WTC11 (cell line): ENCODE measurements at regions of chr19 and their contacts with region 1.

Region 1: DNA sequence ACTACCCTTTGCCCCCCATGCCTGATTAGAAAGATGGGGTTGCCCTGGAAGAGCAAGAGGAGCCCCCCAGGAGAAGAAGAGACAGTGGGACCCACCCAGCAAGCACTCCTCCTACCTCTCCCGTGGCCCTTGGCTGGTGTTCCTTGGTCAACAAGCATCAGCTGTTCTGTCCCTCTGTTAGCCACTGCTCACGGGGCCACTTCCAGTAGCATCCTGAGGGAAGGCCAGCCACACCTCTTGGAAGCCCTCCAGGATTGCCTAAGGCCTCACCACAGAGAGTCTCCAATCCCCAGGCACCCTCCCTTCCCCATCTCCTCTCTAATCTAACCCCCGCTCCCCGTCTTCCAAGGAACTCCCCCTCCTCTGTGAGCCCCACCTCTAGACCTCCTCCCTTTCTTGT is 15.1 kb upstream of the DPP9 start:
- DNase-seq: no peak
- ATAC-seq: no peak
- H3K4me3 Mint-ChIP-seq: no peak overlapping the region
- H3K27ac Mint-ChIP-seq: no peak overlapping the region
- H3K4me1 Mint-ChIP-seq: peaks cover 17% of the 10 kb centered on the region
- H3K27me3 Mint-ChIP-seq: peaks cover under 1% of the 10 kb centered on the region; the same call in 1 of the 2 replicates
- CTCF ChIP-seq: no peak

Region 2: DNA sequence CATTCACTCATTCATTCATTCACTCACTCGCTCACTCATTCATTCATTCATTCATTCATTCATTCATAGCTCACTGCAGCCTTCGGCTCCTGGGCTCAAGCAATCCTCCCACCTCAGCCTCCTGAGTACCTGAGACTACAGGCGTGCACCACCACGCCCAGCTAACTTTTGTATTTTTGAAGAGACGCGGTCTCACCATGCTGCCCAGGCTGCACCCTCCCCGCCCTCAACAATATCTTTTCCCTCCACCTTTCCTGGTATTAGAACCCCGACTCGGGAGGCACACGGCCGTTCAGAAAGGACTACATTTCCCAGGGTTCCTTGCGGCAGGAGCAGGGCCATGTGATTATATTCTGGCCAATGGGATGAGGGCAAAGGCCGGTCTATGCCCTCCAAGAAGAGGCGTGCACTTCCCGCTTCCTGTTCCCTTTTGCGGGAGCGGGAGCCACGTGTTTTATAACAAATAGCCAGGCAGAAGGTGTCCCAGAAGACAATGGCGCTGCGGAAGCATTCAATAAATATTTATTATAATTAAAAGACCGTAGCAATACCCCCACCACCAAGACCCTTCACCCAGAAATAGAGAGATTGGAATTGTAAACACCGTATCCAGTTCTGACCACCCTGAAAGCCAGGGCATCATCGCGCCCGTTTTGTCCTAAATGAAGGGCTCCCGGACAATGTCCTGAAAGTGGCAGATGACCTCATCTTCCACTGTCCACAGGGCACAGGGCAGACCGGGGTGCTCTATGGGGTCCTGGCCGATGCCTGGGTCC is 76.9 kb after region 1 on chr19:
- CTCF ChIA-PET with region 1: interaction called, 17 read pairs
- POLR2A ChIA-PET with region 1: no interaction called
- DNase-seq: peak; percentile 86
- ATAC-seq: peak; percentile 82
- H3K4me3 Mint-ChIP-seq: peak overlapping the region; percentile 58
- H3K27ac Mint-ChIP-seq: no peak overlapping the region
- H3K4me1 Mint-ChIP-seq: peaks cover 2% of the 10 kb centered on the region; the same call in 1 of the 2 replicates
- H3K27me3 Mint-ChIP-seq: peaks cover 25% of the 10 kb centered on the region
- CTCF ChIP-seq: no peak